ENCODE measurements at regions of chr6 and their contacts with region 1.

Region 1: DNA sequence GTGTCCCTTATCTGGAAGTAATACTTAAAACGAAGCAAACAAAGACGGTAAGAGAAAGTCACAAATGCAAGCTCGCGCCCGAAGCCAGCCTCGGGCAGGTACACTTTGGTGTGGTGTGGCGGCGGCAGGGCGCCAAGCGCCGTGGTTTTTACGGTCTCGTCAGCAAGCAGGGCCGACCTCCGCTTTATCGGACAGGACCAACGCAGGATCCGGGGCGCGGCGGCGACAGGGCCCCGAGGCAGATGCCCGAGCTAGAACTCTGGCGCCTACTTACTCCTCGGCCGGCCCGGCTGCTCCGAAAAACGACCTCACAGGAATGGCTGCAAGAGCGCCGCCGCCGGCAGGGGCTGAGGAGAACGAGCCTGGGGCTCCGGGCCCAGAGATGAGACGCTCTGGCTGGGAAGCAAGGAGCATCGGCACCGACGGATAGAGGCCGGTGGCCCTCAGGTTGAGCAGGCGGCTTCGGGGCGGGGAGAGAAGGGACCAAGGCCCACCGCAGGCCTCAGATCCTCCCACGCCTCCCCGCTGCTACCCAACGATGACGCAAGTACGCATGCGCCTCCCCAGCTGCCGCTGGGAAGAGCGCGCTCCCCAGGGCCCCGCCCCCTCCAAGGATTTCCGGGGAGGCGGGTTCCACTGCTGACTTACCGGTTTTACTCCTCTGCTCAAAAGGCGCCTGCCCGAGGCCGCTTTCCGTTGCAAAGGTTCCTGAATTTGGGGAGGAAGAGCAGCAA is 60.6 kb downstream of the FAM217A start:
- DNase-seq: peak; percentile 81 to 96
- H3K4me3 ChIP-seq: peak overlapping the region; percentile 78 to 81
- H3K27ac ChIP-seq: peak overlapping the region; percentile 97 to 99
- H3K4me1 ChIP-seq: peaks cover 7 to 36% of the 10 kb centered on the region in 2 donors
- H3K27me3 ChIP-seq: no peaks in the 10 kb centered on the region
- CTCF ChIP-seq: peak; percentile 43 to 48 (median 43)

Region 2: DNA sequence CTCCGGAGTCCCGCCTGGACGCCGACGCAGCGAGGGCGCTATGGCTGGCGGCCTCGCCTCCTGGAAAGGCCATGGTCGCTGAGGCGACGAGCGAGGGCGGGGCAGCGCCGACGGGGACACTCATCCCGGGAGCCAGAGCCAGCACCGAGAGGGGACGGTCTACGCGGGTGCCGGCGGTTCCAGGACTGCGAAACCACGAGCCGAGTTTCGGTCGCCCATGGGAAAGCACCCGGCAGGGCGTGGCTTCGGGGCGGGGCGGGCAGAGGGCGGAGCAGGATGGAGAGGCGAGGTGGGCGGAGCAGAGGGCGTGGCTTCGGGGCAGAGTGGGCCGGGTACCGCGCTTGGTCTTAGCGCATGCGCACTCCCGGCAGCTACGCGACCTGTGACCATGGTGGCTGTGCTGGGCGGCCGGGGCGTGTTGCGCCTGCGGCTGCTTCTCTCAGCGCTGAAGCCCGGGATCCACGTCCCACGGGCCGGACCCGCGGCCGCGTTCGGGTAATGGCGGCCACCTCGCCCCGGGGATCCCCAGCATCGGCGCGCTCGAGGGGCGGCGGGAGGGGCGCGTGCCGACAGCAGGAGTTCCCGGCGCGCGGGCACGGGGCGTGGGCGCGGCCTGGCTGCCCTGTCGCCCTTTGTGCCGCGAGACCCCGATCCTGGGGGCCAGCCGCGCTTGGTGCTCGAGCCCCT is 899.8 kb before region 1 on chr6 and contains the start of gene BPHL:
- intact Hi-C with region 1: loop called (anchors 10 kb)
- DNase-seq: peak; percentile 75 to 97
- H3K4me3 ChIP-seq: peak within 1 kb of the TSS; percentile 75 to 84
- H3K27ac ChIP-seq: peak within 1 kb of the TSS; percentile 81 to 93
- H3K4me1 ChIP-seq: peaks cover 0 to 5% of the 10 kb centered on the region in 2 donors
- H3K27me3 ChIP-seq: no peaks in the 10 kb centered on the region
- CTCF ChIP-seq: no peak
- total RNA-seq, gene BPHL: 7.7 TPM

Region 3: DNA sequence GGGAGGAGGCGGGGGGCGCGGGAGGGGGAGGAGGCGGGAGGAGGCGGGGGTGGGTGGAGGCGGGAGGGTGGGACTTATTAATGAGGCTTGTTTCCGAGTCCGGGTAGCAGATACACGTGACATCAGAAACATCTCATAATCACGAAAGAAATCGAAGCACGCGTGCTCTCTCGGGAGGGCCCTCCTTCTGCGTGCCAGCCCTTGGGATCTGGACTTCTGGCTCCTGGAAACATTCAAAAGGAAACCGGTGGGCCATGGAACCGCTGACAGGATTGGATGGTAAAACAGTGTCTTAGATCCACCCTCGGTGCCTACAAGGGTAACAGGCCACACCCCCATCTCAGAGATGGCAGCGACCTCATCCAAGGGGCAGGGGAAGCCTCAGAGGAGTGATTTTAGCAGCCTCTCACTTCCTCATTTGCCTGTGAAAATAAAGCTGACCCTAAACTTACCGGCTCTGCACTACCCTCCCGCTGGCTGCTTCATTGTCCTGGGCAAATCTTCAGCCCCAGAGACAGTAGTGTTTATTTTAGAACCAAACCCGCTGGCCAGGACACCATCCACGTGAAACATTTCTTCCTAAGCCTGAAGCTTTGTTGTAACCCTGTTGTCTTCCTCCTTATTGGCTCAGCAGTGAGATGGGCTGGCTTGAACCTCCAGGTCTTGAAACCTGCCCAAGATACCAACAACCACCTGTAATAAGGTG is 662.1 kb before region 1 on chr6:
- intact Hi-C with region 1: loop called (anchors 5 kb)
- DNase-seq: peak; percentile 27 to 88
- H3K4me3 ChIP-seq: peak overlapping the region; percentile 37 to 59
- H3K27ac ChIP-seq: peak overlapping the region; percentile 86 to 89
- H3K4me1 ChIP-seq: peaks cover 3 to 7% of the 10 kb centered on the region in 2 donors
- H3K27me3 ChIP-seq: no peaks in the 10 kb centered on the region
- CTCF ChIP-seq: no peak

Region 4: GRCh38 chr6:3841711-3842565 is 176.4 kb before region 1 on chr6:
- intact Hi-C with region 1: no loop called
- DNase-seq: peak in 1 of 2 donors; percentile 79
- H3K4me3 ChIP-seq: no peak overlapping the region
- H3K27ac ChIP-seq: peak overlapping the region; percentile 85 to 91
- H3K4me1 ChIP-seq: peaks cover 7 to 40% of the 10 kb centered on the region in 2 donors
- H3K27me3 ChIP-seq: no peaks in the 10 kb centered on the region
- CTCF ChIP-seq: no peak

Measured in ascending aorta (tissue), 2 donors.